HAP-1 (cell line): ENCODE measurements at regions of chr5 and their contacts with region 1.

Region 1: GRCh38 chr5:64634997-64635686 is 55.2 kb upstream of the SHISAL2B start:
- DNase-seq: peak in 1 of 2 experiments; percentile 20
- H3K4me3 ChIP-seq: no peak overlapping the region
- H3K4me1 ChIP-seq: no peaks in the 10 kb centered on the region
- H3K27me3 ChIP-seq: peaks cover 17% of the 10 kb centered on the region

Region 2: GRCh38 chr5:64784451-64785025 is 149.4 kb after region 1 on chr5:
- in situ Hi-C with region 1: loop called (anchors 10 kb)
- DNase-seq: peak; percentile 60 to 82
- H3K4me3 ChIP-seq: no peak overlapping the region
- H3K4me1 ChIP-seq: peaks cover 7% of the 10 kb centered on the region; the same call in 1 of the 2 replicates
- H3K27me3 ChIP-seq: no peaks in the 10 kb centered on the region

Region 3: GRCh38 chr5:65047948-65048690 is 413.0 kb after region 1 on chr5:
- in situ Hi-C with region 1: no loop called
- DNase-seq: no peak
- H3K4me3 ChIP-seq: no peak overlapping the region
- H3K4me1 ChIP-seq: no peaks in the 10 kb centered on the region
- H3K27me3 ChIP-seq: no peaks in the 10 kb centered on the region

Region 4: DNA sequence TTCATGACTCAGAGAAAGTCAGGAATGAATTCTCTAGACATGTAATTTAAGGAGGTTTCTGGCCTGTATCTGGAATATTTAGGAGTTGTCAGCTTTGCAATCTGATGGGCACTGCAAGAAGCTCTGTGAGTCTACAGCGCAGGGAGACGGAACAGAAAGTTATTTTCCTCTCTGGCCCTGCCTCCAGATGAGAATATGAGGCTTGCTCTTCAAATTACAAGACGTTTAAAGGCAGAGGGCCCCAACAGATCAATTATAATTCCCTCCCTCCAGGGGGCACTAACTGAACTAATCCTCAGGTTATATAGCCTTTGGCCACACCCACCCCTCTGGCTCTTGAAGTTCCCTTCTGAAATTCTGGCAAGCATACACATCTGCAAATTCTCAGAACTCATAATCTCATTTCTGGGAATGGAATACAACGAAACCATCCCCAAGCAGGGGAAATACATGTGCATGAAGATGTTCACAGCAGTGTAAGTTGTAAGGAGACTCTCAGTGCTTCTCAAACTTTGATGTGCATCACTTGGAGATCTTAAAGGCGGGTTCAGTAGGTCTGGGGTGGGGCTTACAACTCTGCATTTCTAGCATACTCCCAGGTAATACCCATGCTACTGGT is 441.2 kb after region 1 on chr5:
- in situ Hi-C with region 1: no loop called
- DNase-seq: peak; percentile 74 to 75
- H3K4me3 ChIP-seq: no peak overlapping the region
- H3K4me1 ChIP-seq: no peaks in the 10 kb centered on the region
- H3K27me3 ChIP-seq: peaks cover 2% of the 10 kb centered on the region; the same call in 1 of the 2 replicates